Activated B cell treated with CpG ODN at 0.5 μM for 24 hours (primary cell): ENCODE measurements at regions of chr9 and their contacts with region 1.

Region 1: GRCh38 chr9:96217754-96218693 is 84.0 kb downstream of the HSD17B3 start:
- DNase-seq: peak; percentile 60
- ATAC-seq: peak; percentile 76
- H3K4me3 Mint-ChIP-seq: peak overlapping the region; percentile 30
- H3K27ac Mint-ChIP-seq: no peak overlapping the region
- H3K4me1 Mint-ChIP-seq: peaks cover 10% of the 10 kb centered on the region
- H3K27me3 Mint-ChIP-seq: peaks cover 33% of the 10 kb centered on the region
- CTCF ChIP-seq: peak; percentile 62

Region 2: GRCh38 chr9:94668418-94668932 is 1549.5 kb before region 1 on chr9:
- CTCF ChIA-PET with region 1: no interaction called
- POLR2A ChIA-PET with region 1: no interaction called
- intact Hi-C with region 1: loop called (anchors 5 kb)
- DNase-seq: no peak
- ATAC-seq: no peak
- H3K4me3 Mint-ChIP-seq: no peak overlapping the region
- H3K27ac Mint-ChIP-seq: no peak overlapping the region
- H3K4me1 Mint-ChIP-seq: peaks cover 2% of the 10 kb centered on the region
- H3K27me3 Mint-ChIP-seq: peaks cover 6% of the 10 kb centered on the region
- CTCF ChIP-seq: no peak

Region 3: DNA sequence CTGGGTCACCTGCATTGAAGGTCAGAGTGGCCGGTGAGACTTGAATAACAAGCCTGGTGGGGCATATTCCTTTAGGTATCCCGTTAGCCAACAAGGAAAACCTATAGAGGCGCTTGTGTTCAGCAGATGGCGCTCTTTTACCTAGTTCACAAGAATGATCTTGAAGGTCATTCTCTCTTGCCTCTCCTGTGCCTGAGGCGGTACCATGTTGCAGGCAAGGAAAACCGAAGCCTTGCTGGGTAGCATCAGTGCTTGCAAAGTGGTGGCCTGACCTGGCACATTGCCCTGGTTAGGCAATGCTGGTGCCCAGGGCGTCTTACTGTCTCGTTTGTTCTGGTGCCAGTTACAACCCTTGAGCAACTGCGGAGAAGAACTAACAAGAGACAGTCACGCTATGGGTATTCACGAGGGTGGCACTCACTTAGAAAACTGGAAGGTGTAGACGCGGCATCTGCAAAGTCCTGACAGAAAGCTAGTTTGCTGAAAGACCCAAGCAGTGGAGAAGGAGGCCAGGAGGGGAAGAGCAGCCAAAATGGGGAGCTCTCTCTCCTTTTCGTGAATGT is 1434.8 kb before region 1 on chr9:
- CTCF ChIA-PET with region 1: no interaction called
- POLR2A ChIA-PET with region 1: no interaction called
- intact Hi-C with region 1: loop called (anchors 10 kb)
- DNase-seq: no peak
- ATAC-seq: no peak
- H3K4me3 Mint-ChIP-seq: no peak overlapping the region
- H3K27ac Mint-ChIP-seq: no peak overlapping the region
- H3K4me1 Mint-ChIP-seq: peaks cover 7% of the 10 kb centered on the region
- H3K27me3 Mint-ChIP-seq: no peaks in the 10 kb centered on the region
- CTCF ChIP-seq: no peak

Region 4: DNA sequence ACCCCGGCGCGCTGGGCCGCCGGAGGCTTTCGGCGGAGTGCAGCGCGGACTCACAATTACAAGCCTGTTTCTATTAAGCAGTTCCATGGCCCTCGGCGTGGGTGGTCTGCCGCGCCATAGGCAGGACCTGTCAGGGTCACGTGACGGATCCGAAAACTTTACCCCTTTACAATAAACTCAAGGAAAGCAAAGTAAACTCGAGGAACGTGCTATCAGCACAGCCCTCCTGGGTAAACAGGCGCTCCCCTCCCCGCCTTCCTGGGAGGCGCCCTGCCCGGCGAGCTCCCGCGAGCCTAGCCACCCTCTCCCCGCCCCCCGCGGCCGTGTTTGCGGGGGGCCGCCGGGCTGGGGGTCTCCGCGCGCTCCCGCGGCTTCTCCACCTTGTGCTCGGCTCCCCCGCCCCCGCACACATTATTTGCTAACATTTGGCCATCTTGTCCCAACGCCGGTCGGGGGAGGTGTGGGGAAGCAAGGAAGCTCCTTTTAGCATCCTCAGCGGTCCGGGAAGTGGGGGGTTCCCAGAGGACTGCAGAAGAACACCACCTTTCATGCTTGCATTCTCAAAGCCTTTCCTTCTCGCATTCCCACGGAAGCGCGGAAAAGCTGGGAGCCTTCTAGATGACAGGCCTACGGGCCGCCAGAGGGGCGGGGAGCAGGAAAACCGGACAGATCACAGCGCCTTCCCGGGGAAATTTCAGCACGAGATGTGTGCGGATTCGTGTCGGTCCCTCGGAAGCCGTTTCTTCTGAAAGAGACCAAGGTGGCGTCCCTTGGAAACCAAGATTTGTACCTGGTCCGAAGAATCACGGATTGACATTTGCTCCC is 701.1 kb before region 1 on chr9 and contains the start of gene PTCH1:
- CTCF ChIA-PET with region 1: no interaction called
- POLR2A ChIA-PET with region 1: no interaction called
- intact Hi-C with region 1: loop called (anchors 5 kb)
- DNase-seq: no peak
- ATAC-seq: peak; percentile 49
- H3K4me3 Mint-ChIP-seq: peak within 1 kb of the TSS; percentile 89
- H3K27ac Mint-ChIP-seq: peak within 1 kb of the TSS; percentile 62
- H3K4me1 Mint-ChIP-seq: peaks cover 16% of the 10 kb centered on the region
- H3K27me3 Mint-ChIP-seq: peaks cover 49% of the 10 kb centered on the region
- CTCF ChIP-seq: no peak
- total RNA-seq, gene PTCH1: 5.9 and 8.6 TPM in 2 replicates

Region 5: DNA sequence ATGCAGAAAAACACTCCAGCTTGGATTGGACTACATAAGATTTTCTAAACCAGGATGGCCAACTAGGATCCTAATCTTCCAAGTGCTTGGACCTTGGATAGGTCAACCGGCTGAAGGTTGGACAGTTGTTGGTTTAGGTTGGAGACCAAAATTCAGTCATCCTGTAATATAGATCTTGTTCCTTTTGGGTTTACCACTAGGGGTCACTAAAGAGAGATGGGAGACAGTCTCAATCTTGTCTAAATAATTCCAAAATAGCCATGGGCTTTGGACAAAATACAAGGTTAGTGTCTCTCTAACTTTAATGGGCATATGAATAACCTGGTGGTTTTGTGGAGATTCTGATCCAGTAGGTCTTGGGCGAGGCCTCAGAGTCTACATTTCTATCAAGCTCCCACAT is 491.3 kb before region 1 on chr9:
- CTCF ChIA-PET with region 1: no interaction called
- POLR2A ChIA-PET with region 1: no interaction called
- intact Hi-C with region 1: loop called (anchors 2 kb)
- DNase-seq: no peak
- ATAC-seq: no peak
- H3K4me3 Mint-ChIP-seq: no peak overlapping the region
- H3K27ac Mint-ChIP-seq: no peak overlapping the region
- H3K4me1 Mint-ChIP-seq: peaks cover 13% of the 10 kb centered on the region
- H3K27me3 Mint-ChIP-seq: peaks cover 2% of the 10 kb centered on the region
- CTCF ChIP-seq: no peak

Region 6: GRCh38 chr9:96305171-96305570 is 87.1 kb after region 1 on chr9:
- CTCF ChIA-PET with region 1: no interaction called
- POLR2A ChIA-PET with region 1: no interaction called
- intact Hi-C with region 1: no loop called
- DNase-seq: no peak
- ATAC-seq: no peak
- H3K4me3 Mint-ChIP-seq: no peak overlapping the region
- H3K27ac Mint-ChIP-seq: no peak overlapping the region
- H3K4me1 Mint-ChIP-seq: no peaks in the 10 kb centered on the region
- H3K27me3 Mint-ChIP-seq: peaks cover 9% of the 10 kb centered on the region
- CTCF ChIP-seq: no peak